ENCODE measurements at regions of chr13 and their contacts with region 1.

Region 1: GRCh38 chr13:24270639-24271141 is 38.7 kb upstream of the C1QTNF9 start:
- DNase-seq: peak in 8 of 9 donors; percentile 57 to 72 (median 66)
- ATAC-seq: peak; percentile 56
- H3K4me3 ChIP-seq: peak overlapping the region; percentile 56
- H3K4me3 Mint-ChIP-seq: peak overlapping the region; percentile 87 to 99 (median 92)
- H3K27ac ChIP-seq: peak overlapping the region; percentile 94
- H3K27ac Mint-ChIP-seq: peak overlapping the region; percentile 97 to 100 (median 99)
- H3K4me1 ChIP-seq: peaks cover 82 to 83% of the 10 kb centered on the region in 2 donors
- H3K4me1 Mint-ChIP-seq: peaks cover 66 to 97% (median 93%) of the 10 kb centered on the region in 7 donors
- H3K27me3 ChIP-seq: no peaks in the 10 kb centered on the region
- H3K27me3 Mint-ChIP-seq: peaks cover 0 to 3% (median 0%) of the 10 kb centered on the region in 5 donors

Region 2: DNA sequence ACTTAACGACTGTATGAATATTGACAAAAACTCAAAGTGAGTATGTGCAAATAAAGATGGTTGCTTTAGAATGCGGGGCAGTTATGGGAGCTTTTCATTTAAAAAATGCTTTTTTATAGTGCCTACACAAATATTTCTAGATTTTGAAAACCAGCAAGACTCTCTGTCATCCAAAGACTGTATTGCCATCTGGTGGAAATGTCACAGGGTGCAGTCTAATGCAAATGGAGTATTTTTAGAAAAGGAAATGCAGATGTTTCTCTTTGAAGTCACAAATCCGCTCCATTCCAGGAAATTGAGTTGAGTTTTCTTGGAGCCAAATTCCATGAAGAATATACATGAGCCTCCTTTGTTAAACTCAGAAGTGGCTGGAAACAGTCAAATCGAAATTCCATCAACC is 371.1 kb before region 1 on chr13:
- CTCF ChIA-PET with region 1: no interaction called
- POLR2A ChIA-PET with region 1: no interaction called
- intact Hi-C with region 1: no loop called
- DNase-seq: peak in 5 of 9 donors; percentile 12 to 41 (median 28)
- ATAC-seq: peak; percentile 74
- H3K4me3 ChIP-seq: no peak overlapping the region
- H3K4me3 Mint-ChIP-seq: no peak overlapping the region
- H3K27ac ChIP-seq: no peak overlapping the region
- H3K27ac Mint-ChIP-seq: no peak overlapping the region
- H3K4me1 ChIP-seq: no peaks in the 10 kb centered on the region
- H3K4me1 Mint-ChIP-seq: peaks cover 0 to 10% (median 3%) of the 10 kb centered on the region in 7 donors
- H3K27me3 ChIP-seq: peaks cover 0 to 10% of the 10 kb centered on the region in 2 donors
- H3K27me3 Mint-ChIP-seq: peaks cover 26 to 42% (median 37%) of the 10 kb centered on the region in 5 donors

Region 3: DNA sequence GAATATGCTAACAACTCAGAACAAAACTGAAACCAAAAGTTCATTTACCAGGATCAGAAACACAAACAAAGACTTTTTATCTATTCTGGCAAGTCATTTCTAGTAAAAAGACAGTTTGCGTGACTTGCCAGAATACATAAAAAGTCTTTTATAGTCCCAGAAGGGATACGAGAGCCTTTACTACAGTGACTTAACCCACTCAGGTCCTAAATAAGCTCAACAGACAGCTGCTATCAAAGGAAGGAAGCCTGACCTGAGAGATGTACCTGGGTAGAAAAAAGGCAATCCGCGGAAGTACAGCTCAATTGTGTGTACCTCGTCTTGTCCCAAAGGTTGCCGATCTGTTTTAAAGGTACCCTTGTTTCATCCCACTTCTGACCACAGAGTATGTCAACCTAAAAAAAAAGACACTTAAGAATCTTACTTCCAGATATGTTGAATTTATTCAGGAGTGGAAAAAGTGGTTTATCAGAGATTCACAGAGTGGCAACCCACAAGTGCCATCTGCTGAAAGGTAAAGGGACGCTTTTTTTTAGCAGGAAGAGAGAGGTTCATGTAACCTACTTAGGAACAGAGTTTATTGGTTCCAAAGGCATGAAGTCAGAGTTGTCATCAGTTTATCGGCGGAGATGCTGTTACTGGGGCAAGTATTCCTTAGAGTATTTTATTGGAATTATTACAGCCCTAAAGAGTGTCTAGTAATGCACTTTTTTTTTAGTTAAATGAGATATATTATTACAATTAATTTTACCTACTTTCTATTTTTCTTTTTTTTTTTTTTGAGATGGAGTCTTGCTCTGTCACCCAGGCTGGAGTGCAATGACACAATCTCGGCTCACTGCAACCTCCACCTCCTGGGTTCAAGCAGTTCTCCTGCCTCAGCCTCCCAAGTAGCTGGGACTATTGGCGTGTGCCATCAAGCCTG is 303.7 kb before region 1 on chr13:
- CTCF ChIA-PET with region 1: no interaction called
- POLR2A ChIA-PET with region 1: interaction called, 3 read pairs
- intact Hi-C with region 1: loop called in 1 of 2 experiments (anchors 2 kb)
- DNase-seq: peak in 6 of 9 donors; percentile 19 to 58 (median 48)
- ATAC-seq: peak; percentile 79
- H3K4me3 ChIP-seq: peak overlapping the region; percentile 57
- H3K4me3 Mint-ChIP-seq: peak overlapping the region; percentile 65 to 88 (median 84)
- H3K27ac ChIP-seq: peak overlapping the region; percentile 52
- H3K27ac Mint-ChIP-seq: peak overlapping the region; percentile 18 to 93 (median 88)
- H3K4me1 ChIP-seq: peaks cover 6% of the 10 kb centered on the region in 2 donors
- H3K4me1 Mint-ChIP-seq: peaks cover 6 to 39% (median 18%) of the 10 kb centered on the region in 7 donors
- H3K27me3 ChIP-seq: no peaks in the 10 kb centered on the region
- H3K27me3 Mint-ChIP-seq: no peaks in the 10 kb centered on the region

Region 4: DNA sequence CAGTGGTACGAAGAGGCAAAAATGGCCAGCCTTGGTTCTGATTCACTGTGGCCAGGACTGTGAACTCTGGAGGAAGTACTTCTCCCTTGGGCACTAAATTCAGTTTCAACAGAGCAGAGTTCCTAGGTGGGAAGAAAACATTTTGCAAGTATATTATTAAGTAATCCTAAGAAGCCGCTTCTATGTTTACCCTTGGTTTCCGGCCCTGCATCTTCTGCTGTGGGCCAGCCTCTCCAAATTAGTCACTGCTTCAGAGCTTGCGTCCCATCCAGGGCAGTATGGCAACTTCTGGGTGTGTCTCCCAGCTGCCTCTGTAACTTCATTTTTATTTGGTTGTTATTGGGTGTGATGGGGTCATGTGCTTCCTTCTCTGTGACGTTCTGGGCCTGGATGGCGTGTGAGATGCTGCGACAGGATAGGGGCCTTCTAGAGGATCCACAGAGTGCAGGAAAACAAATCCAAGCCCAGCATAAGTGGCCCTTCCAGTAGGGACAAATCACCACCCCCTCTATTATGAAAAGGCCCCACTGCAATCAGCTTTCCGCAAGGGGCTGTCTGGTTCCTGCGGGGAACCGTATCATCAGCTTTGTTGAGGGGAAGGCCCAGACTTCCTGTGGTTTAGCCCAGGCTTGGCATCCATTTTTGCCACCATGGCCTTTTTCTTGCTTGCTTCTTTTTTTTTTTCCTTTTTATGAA is 16.4 kb before region 1 on chr13:
- CTCF ChIA-PET with region 1: interaction called, 62 read pairs
- POLR2A ChIA-PET with region 1: interaction called, 637 read pairs
- intact Hi-C with region 1: loop called (anchors 1 kb)
- DNase-seq: peak in 7 of 9 donors; percentile 59 to 80 (median 68)
- ATAC-seq: peak; percentile 76
- H3K4me3 ChIP-seq: peak overlapping the region; percentile 82
- H3K4me3 Mint-ChIP-seq: peak overlapping the region; percentile 86 to 96 (median 92)
- H3K27ac ChIP-seq: peak overlapping the region; percentile 90
- H3K27ac Mint-ChIP-seq: peak overlapping the region; percentile 86 to 99 (median 95)
- H3K4me1 ChIP-seq: peaks cover 58 to 75% of the 10 kb centered on the region in 2 donors
- H3K4me1 Mint-ChIP-seq: peaks cover 44 to 96% (median 91%) of the 10 kb centered on the region in 7 donors
- H3K27me3 ChIP-seq: no peaks in the 10 kb centered on the region
- H3K27me3 Mint-ChIP-seq: no peaks in the 10 kb centered on the region

Region 5: DNA sequence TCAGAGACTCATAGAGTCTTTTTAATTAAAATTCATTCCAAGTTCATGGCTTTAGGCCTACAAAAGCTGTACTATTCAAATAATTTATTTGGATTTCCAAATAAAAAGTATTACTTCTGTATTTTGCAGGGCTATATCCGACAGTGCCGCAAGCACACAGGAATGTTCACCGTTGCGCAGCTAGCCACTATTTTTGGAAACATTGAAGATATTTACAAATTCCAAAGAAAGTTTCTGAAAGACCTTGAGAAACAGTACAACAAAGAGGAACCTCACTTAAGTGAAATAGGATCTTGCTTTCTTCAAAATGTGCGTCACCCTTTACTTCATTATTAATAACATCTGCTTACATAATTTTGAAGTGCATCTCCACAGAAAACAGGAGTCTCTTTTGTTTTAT is 18.2 kb after region 1 on chr13:
- CTCF ChIA-PET with region 1: interaction called, 8 read pairs
- POLR2A ChIA-PET with region 1: interaction called, 6 read pairs
- intact Hi-C with region 1: loop called in 1 of 2 experiments (anchors 2 kb)
- DNase-seq: no peak
- ATAC-seq: no peak
- H3K4me3 ChIP-seq: no peak overlapping the region
- H3K4me3 Mint-ChIP-seq: no peak overlapping the region
- H3K27ac ChIP-seq: no peak overlapping the region
- H3K27ac Mint-ChIP-seq: no peak overlapping the region
- H3K4me1 ChIP-seq: no peaks in the 10 kb centered on the region
- H3K4me1 Mint-ChIP-seq: peaks cover 0 to 6% (median 2%) of the 10 kb centered on the region in 7 donors
- H3K27me3 ChIP-seq: no peaks in the 10 kb centered on the region
- H3K27me3 Mint-ChIP-seq: no peaks in the 10 kb centered on the region

Region 6: DNA sequence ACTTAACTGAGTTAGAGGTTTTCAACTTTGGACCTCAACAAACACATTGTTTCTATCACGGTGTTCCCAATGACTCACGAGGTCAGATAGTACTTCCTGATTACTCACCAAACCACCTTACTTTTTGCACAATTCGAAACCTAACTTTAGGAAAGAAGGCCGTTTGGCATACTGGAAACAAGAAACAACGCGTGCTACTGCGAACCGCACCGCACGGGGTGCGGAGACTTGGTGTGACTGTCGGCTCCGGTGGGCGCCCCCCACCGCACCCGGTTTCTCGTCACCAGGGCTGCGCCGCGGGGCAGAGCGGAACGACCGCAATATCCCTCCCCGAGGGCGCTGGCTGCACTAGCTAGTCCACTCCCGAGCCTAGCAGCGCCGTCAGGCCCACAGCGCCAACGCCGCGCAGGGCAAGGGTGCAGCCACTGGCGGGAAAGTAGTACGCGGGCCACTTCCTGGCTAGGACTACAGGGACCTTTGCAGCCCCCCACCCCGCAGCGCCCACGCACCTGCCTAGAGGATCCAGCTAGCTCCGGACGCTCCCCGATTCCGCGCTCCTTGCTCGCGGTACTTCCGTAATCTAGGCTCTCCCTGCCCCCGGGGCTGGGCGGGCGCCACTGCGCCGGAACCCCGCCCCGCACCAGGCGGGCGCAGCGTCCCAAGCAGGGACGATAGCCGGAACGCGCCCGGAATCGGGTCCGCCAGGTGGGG is 241.7 kb after region 1 on chr13 and contains the start of gene PARP4:
- CTCF ChIA-PET with region 1: no interaction called
- POLR2A ChIA-PET with region 1: interaction called, 3 read pairs
- intact Hi-C with region 1: loop called (anchors 2 kb)
- DNase-seq: peak; percentile 49 to 74 (median 68)
- ATAC-seq: peak; percentile 85
- H3K4me3 ChIP-seq: peak within 1 kb of the TSS; percentile 95
- H3K4me3 Mint-ChIP-seq: peak within 1 kb of the TSS; percentile 88 to 96 (median 92)
- H3K27ac ChIP-seq: peak within 1 kb of the TSS; percentile 67
- H3K27ac Mint-ChIP-seq: peak within 1 kb of the TSS; percentile 68 to 93 (median 88)
- H3K4me1 ChIP-seq: peaks cover 3 to 7% of the 10 kb centered on the region in 2 donors
- H3K4me1 Mint-ChIP-seq: peaks cover 22 to 51% (median 41%) of the 10 kb centered on the region in 7 donors
- H3K27me3 ChIP-seq: no peaks in the 10 kb centered on the region
- H3K27me3 Mint-ChIP-seq: peaks cover 0 to 4% (median 0%) of the 10 kb centered on the region in 5 donors
- total RNA-seq, gene PARP4: 33.4 to 71.1 (median 65.4) TPM

Region 7: DNA sequence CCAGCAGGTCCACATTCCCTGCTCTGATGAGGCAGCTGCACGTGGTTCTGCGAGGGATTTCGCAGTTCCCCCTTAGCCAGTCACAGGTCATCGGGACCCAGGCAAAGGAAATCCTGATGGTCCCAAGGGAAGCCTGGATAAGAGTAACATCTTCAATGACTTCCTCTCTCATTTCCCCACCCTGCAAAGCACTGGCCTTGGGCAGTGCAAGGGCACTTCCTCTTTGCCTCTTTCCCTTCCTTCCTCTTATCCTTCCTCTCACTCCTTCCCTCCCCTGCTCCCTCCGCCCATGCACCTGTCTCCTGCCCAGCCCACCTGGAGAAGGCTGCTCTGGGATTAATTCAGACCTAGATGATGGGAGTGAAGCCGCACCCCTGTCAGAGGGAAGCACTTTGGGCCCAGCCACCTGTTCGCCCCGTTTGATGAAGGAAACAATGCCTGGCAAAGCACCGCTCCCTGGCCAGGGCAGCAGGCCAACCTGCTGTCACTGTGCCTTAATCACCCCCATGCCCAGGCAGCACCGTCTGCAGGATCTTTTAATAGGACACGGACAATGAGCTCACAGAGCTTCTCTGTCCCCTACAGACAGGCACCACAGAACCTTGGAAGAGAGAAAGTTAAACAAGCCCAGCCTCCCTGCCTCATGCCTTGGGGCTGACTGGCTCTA is 711.8 kb after region 1 on chr13:
- CTCF ChIA-PET with region 1: no interaction called
- POLR2A ChIA-PET with region 1: no interaction called
- intact Hi-C with region 1: no loop called
- DNase-seq: no peak
- ATAC-seq: no peak
- H3K4me3 ChIP-seq: no peak overlapping the region
- H3K4me3 Mint-ChIP-seq: no peak overlapping the region
- H3K27ac ChIP-seq: no peak overlapping the region
- H3K27ac Mint-ChIP-seq: peak overlapping the region in 1 of 9 donors; percentile 25
- H3K4me1 ChIP-seq: no peaks in the 10 kb centered on the region
- H3K4me1 Mint-ChIP-seq: peaks cover 0 to 2% (median 0%) of the 10 kb centered on the region in 7 donors
- H3K27me3 ChIP-seq: no peaks in the 10 kb centered on the region
- H3K27me3 Mint-ChIP-seq: peaks cover 35 to 47% (median 41%) of the 10 kb centered on the region in 5 donors